Colonic mucosa (tissue), 4 donors: ENCODE measurements at regions of chr17 and their contacts with region 1.

Region 1: GRCh38 chr17:78993241-78993956 is 13.7 kb upstream of the LGALS3BP start:
- DNase-seq: peak; percentile 79
- H3K4me3 ChIP-seq: no peak overlapping the region
- H3K27ac ChIP-seq: no peak overlapping the region
- H3K4me1 ChIP-seq: peaks cover 25% of the 10 kb centered on the region
- H3K27me3 ChIP-seq: no peaks in the 10 kb centered on the region
- CTCF ChIP-seq: peak; percentile 77

Region 2: DNA sequence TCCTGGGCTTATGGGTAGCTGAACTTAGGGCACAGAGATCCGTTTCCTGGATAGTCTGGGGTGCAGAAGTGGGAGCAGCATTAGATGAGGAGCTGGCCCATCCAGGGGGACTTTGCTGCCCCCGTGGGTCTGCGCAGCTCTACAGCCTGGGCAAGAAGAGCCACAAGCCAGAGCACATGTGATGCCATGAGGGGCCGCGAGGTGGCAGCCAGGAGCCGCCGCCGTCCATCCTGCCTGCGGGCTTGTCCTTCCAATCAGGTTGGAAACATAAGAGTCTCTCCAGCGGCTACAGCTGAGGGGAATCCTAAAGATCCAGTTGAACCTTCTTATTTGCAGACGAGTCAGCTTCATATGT is 52.4 kb after region 1 on chr17:
- intact Hi-C with region 1: loop called (anchors 2 kb)
- DNase-seq: peak; percentile 78
- H3K4me3 ChIP-seq: no peak overlapping the region
- H3K27ac ChIP-seq: no peak overlapping the region
- H3K4me1 ChIP-seq: no peaks in the 10 kb centered on the region
- H3K27me3 ChIP-seq: no peaks in the 10 kb centered on the region
- CTCF ChIP-seq: peak; percentile 91

Region 3: DNA sequence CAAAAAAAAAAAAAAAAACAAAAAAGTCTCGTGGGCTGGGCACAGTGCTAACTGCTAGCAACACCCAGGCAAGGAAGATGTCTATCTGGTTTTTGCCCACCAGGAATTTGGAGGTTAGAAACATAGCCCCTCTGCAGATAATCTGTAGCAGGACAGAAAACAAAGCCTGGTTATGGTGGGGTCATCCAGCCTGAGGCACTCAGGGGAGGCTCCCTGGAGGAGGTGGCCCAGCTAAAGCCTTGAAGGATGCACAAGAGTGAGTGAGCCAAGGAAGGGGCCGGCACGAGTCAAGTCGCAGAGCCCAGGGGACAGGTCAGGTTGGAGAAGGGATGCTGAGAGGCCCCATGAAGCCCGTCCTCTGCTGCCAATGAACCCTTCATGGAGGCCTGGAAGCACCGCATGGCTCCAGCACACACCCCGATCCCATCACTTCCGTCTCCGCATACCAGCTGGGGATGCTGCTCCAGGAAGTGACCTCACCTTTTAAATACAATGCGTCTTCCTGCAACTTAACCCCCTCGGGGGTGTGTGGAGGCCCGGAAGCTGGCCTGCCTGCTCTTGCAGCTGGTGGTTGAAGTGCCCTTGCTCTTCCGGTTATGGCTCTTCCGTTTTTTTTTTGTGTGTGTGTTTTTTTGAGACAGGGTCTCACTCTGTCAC is 167.7 kb after region 1 on chr17:
- intact Hi-C with region 1: no loop called
- DNase-seq: no peak
- H3K4me3 ChIP-seq: no peak overlapping the region
- H3K27ac ChIP-seq: no peak overlapping the region
- H3K4me1 ChIP-seq: no peaks in the 10 kb centered on the region
- H3K27me3 ChIP-seq: peaks cover 3% of the 10 kb centered on the region
- CTCF ChIP-seq: no peak